Heart left ventricle (tissue), 16 donors: ENCODE measurements at regions of chr1 and their contacts with region 1.

Region 1: GRCh38 chr1:201042779-201043461 is 19.4 kb upstream of the KIF21B start:
- DNase-seq: peak in 4 of 5 donors; percentile 47 to 58 (median 54)
- ATAC-seq: peak; percentile 44 to 88 (median 84)
- H3K4me3 ChIP-seq: no peak overlapping the region
- H3K27ac ChIP-seq: no peak overlapping the region
- H3K4me1 ChIP-seq: peaks cover 0 to 8% (median 3%) of the 10 kb centered on the region in 12 donors
- H3K27me3 ChIP-seq: no peaks in the 10 kb centered on the region
- CTCF ChIP-seq: peak; percentile 71 to 91 (median 83)
- POLR2A ChIP-seq: no peak

Region 2: DNA sequence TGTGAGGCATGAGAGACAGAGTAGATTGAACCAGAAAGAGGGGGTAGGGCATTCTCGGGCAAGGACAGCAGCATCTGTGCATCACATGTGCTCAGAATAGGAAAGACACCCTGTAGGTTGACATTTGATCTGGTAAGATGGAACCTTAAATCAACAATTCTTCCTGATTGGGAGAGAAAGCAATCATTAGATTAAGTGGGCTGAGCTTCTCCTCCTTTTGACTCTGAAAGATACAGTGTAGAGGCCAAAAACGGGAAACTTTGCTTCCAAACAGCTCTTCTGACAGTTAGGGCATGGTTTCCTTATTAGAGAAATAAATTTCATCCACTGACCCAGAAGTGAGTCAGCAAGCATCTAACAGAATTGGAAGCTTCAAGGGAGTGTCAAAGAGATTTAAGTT is 432.1 kb before region 1 on chr1:
- intact Hi-C with region 1: loop called in 1 of 10 experiments (anchors 10 kb)
- DNase-seq: no peak
- ATAC-seq: no peak
- H3K4me3 ChIP-seq: no peak overlapping the region
- H3K27ac ChIP-seq: no peak overlapping the region
- H3K4me1 ChIP-seq: no peaks in the 10 kb centered on the region
- H3K27me3 ChIP-seq: no peaks in the 10 kb centered on the region
- CTCF ChIP-seq: no peak
- POLR2A ChIP-seq: no peak

Region 3: GRCh38 chr1:200866521-200866920 is 176.4 kb before region 1 on chr1:
- intact Hi-C with region 1: loop called in 1 of 10 experiments (anchors 10 kb)
- DNase-seq: no peak
- ATAC-seq: peak in 2 of 4 donors; percentile 24 to 34
- H3K4me3 ChIP-seq: no peak overlapping the region
- H3K27ac ChIP-seq: no peak overlapping the region
- H3K4me1 ChIP-seq: peaks cover 0 to 3% (median 0%) of the 10 kb centered on the region in 12 donors
- H3K27me3 ChIP-seq: peaks cover 0 to 27% (median 10%) of the 10 kb centered on the region in 9 donors
- CTCF ChIP-seq: no peak
- POLR2A ChIP-seq: no peak

Region 4: GRCh38 chr1:200971955-200972711 is 70.8 kb before region 1 on chr1:
- intact Hi-C with region 1: loop called (anchors 1 to 5 kb)
- DNase-seq: peak; percentile 49 to 78 (median 62)
- ATAC-seq: peak in 3 of 4 donors; percentile 27 to 35 (median 33)
- H3K4me3 ChIP-seq: peak overlapping the region in 3 of 12 donors; percentile 7 to 19 (median 17)
- H3K27ac ChIP-seq: no peak overlapping the region
- H3K4me1 ChIP-seq: peaks cover 0 to 11% (median 4%) of the 10 kb centered on the region in 12 donors
- H3K27me3 ChIP-seq: no peaks in the 10 kb centered on the region
- CTCF ChIP-seq: peak; percentile 85 to 99 (median 96)
- POLR2A ChIP-seq: no peak

Region 5: GRCh38 chr1:201009962-201010645 is 32.8 kb before region 1 on chr1:
- intact Hi-C with region 1: no loop called
- DNase-seq: no peak
- ATAC-seq: no peak
- H3K4me3 ChIP-seq: no peak overlapping the region
- H3K27ac ChIP-seq: no peak overlapping the region
- H3K4me1 ChIP-seq: peaks cover 0 to 24% (median 7%) of the 10 kb centered on the region in 12 donors
- H3K27me3 ChIP-seq: peaks cover 0 to 23% (median 0%) of the 10 kb centered on the region in 9 donors
- CTCF ChIP-seq: no peak
- POLR2A ChIP-seq: no peak